ENCODE measurements at regions of chr1 and their contacts with region 1.

Region 1: GRCh38 chr1:67005068-67005467 is 48.9 kb downstream of the SLC35D1 start:
- DNase-seq: no peak
- ATAC-seq: no peak
- H3K4me3 ChIP-seq: no peak overlapping the region
- H3K27ac ChIP-seq: no peak overlapping the region
- H3K4me1 ChIP-seq: no peaks in the 10 kb centered on the region
- H3K27me3 ChIP-seq: no peaks in the 10 kb centered on the region
- CTCF ChIP-seq: no peak
- POLR2A ChIP-seq: no peak
- RAD21 ChIP-seq: no peak

Region 2: DNA sequence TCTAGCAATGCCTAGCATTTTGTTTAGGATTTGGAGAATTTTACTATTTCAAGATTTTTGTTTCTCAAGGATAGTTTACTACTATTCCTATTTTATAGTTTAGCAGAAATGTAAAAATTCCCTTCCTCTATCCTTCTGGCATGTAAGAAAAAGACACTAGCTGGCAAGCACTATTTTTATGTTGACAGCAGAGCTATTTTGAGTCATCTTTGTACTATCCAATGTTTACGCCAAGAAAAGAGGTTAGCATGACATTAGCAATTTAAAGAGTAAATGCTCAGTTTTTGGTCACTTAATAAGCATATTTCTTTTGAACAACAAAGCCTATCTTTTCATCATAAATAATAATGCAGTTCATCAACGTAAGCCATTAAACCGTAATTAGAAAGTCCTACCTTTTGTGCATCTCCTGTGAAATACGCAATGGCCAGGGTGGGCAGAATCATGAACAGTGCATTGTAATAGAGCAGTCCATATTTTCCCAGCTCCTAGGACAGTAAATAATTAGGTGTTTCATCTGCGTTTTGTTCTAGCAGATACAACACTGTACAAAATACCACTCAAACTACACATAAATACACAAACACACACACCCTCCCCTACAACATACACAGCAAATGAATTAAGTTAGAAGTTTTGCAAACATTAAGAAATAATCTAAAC is 36.9 kb after region 1 on chr1:
- CTCF ChIA-PET with region 1: no interaction called
- POLR2A ChIA-PET with region 1: no interaction called
- dilution Hi-C with region 1: no loop called
- in situ Hi-C with region 1: no loop called
- intact Hi-C with region 1: loop called (anchors 2 kb)
- DNase-seq: peak; percentile 79
- ATAC-seq: peak; percentile 88
- H3K4me3 ChIP-seq: no peak overlapping the region
- H3K27ac ChIP-seq: peak overlapping the region; percentile 82; the same call in 1 of the 2 replicates
- H3K4me1 ChIP-seq: peaks cover 15% of the 10 kb centered on the region
- H3K27me3 ChIP-seq: no peaks in the 10 kb centered on the region
- CTCF ChIP-seq: no peak
- POLR2A ChIP-seq: no peak
- RAD21 ChIP-seq: no peak